Right ventricle myocardium superior (tissue), 1 donor: ENCODE measurements at regions of chr1 and their contacts with region 1.

Region 1: GRCh38 chr1:19974822-19975416 is 4.5 kb downstream of the PLA2G2A start:
- DNase-seq: no peak
- ATAC-seq: peak; percentile 90

Region 2: DNA sequence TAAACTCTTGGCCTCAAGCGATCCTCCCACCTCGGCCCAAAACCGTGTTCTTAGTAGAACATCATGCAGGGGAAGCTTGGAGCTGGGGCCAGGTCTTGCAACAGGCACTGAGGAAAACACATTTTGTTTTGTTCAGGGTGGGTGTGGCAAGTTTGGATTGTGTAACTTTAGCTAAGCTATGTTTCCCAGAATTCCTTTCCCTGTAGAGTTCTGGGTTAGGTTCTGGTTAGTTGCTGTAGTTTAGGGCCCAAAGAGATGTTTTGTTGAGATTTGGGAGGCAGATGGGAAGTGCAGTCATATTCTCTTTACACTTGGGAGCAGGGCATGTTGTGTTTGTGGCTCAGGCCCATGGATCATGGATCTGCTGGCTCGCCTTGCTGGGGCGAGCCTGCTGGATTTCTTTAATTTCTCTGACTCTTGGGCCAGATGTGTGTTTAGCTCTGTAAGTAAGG is 119.0 kb after region 1 on chr1:
- intact Hi-C with region 1: loop called (anchors 5 kb)
- DNase-seq: peak; percentile 88
- ATAC-seq: peak; percentile 74